ENCODE measurements at regions of chr7 and their contacts with region 1.

Region 1: GRCh38 chr7:18320971-18321567 is 174.5 kb upstream of the HDAC9 start:
- DNase-seq: peak; percentile 66
- H3K4me3 ChIP-seq: no peak overlapping the region
- H3K27ac ChIP-seq: no peak overlapping the region
- H3K4me1 ChIP-seq: no peaks in the 10 kb centered on the region
- H3K27me3 ChIP-seq: no peaks in the 10 kb centered on the region
- CTCF ChIP-seq: peak; percentile 67

Region 2: GRCh38 chr7:17815318-17815717 is 505.8 kb before region 1 on chr7:
- CTCF ChIA-PET with region 1: no interaction called
- POLR2A ChIA-PET with region 1: no interaction called
- intact Hi-C with region 1: no loop called
- DNase-seq: no peak
- H3K4me3 ChIP-seq: no peak overlapping the region
- H3K27ac ChIP-seq: no peak overlapping the region
- H3K4me1 ChIP-seq: no peaks in the 10 kb centered on the region
- H3K27me3 ChIP-seq: no peaks in the 10 kb centered on the region
- CTCF ChIP-seq: no peak

Region 3: GRCh38 chr7:17971411-17971810 is 349.7 kb before region 1 on chr7:
- CTCF ChIA-PET with region 1: no interaction called
- POLR2A ChIA-PET with region 1: no interaction called
- intact Hi-C with region 1: loop called (anchors 10 kb)
- DNase-seq: no peak
- H3K4me3 ChIP-seq: no peak overlapping the region
- H3K27ac ChIP-seq: no peak overlapping the region
- H3K4me1 ChIP-seq: no peaks in the 10 kb centered on the region
- H3K27me3 ChIP-seq: no peaks in the 10 kb centered on the region
- CTCF ChIP-seq: peak; percentile 31; the same call in 1 of the 2 replicates

Region 4: DNA sequence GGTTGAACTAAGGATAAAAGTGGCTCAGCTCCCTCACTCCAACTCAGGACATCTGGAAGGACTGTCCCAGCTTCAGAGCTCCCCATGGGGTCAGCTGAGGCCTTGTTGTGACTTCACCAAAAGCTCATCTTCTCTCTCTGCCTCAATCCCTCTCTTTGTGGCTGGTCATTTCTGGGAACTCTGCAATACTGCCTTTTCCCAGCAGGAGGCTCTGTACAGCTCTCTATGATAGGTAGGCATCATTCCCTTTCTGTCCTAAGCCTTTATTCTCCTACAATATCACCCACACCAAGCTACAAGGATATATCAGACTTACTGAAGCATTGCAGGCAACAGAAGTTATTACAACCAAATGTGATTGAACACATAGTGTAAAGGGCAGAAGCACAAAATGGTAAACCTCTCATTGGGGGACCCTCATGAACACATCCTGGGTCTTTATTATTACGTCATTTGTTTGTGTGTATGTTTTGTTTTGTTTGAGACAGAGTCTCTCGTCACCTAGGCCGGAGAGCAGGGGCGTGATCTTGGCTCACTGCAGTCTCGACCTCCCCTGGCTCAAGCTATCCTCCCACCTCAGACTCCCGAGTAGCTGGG is 256.7 kb before region 1 on chr7:
- CTCF ChIA-PET with region 1: no interaction called
- POLR2A ChIA-PET with region 1: no interaction called
- intact Hi-C with region 1: loop called (anchors 10 kb)
- DNase-seq: peak; percentile 42
- H3K4me3 ChIP-seq: no peak overlapping the region
- H3K27ac ChIP-seq: no peak overlapping the region
- H3K4me1 ChIP-seq: no peaks in the 10 kb centered on the region
- H3K27me3 ChIP-seq: no peaks in the 10 kb centered on the region
- CTCF ChIP-seq: peak; percentile 71

Measured in A673 (cell line).